CD8-positive, alpha-beta T cell (primary cell): ENCODE measurements at regions of chr15 and their contacts with region 1.

Region 1: DNA sequence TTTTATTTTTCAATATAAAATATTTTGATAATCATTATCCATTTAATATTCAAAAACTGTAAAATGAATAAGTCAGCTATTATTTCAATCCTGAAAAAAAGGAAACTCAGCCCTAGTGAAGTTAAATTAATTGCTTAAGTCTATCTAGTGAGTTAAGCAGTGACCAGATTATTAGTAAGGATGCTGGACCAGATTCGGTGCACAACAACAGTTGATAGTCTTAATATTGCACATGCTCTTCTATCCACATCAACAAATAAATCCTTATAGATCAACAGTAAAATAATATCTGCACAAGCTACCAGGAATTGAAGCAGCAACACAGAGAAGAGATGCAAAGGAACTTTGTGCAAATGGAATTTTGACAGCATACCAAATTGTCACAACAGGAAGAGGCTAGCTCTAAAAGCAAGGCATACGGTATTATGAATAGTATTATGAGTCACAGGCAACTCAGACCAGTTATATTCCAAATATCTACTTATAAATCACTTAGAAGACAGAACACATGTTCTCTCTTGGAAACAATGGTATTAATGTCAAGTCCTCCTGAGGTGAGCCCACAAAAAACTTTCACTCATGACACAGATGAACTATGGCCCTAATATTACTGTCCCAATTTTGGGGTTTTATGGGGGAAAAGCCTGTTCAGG is 24.9 kb downstream of the VPS13C start:
- DNase-seq: no peak
- ATAC-seq: no peak
- H3K4me3 ChIP-seq: no peak overlapping the region
- H3K4me3 Mint-ChIP-seq: no peak overlapping the region
- H3K27ac ChIP-seq: no peak overlapping the region
- H3K27ac Mint-ChIP-seq: no peak overlapping the region
- H3K4me1 ChIP-seq: no peaks in the 10 kb centered on the region
- H3K4me1 Mint-ChIP-seq: peaks cover 26% of the 10 kb centered on the region
- H3K27me3 ChIP-seq: no peaks in the 10 kb centered on the region
- H3K27me3 Mint-ChIP-seq: no peaks in the 10 kb centered on the region
- CTCF ChIP-seq: no peak

Region 2: DNA sequence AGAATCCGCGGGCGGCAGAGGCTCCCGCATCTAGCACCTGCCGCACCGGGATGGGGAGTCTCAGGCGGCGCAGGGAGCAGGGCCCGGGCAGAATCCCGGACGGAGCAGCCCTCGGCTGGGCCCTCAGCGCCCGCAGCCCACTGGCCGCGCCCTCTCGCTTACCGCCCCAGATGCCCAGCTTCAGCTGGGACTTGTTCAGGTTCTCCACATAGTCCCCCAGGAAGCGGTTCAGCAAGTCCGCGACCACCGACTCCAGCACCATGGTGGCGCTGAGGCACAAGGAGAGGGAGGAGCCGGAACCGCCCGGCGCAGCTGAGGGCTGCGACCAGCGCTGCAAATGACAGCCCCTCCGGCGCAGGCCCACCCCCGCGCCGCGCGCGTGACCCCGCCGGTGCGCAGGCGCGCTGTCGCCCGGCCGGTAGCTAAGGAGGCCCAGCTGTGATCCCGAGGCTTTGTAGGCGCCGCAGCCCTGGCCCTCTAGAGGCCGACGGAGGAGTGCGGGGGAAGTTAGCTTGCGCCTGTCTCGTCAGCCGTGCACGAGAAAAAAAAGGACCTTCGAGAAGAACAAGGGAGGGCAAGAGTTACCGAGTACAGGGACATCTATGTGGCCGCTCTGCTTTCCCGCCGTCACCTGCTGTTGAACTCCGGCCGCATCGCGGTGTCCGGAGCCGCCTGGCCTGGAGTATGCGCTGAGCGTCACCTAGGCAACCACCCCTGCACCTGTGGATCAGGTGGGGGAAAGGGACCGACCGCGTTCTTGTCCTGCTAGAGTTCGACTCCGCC is 24.9 kb after region 1 on chr15 and contains the start of gene VPS13C:
- CTCF ChIA-PET with region 1: interaction called, 3 read pairs
- POLR2A ChIA-PET with region 1: no interaction called
- intact Hi-C with region 1: loop called in 1 of 2 experiments (anchors 2 kb)
- DNase-seq: peak; percentile 85 to 97 (median 89)
- ATAC-seq: peak; percentile 82
- H3K4me3 ChIP-seq: peak within 1 kb of the TSS; percentile 89 to 95
- H3K4me3 Mint-ChIP-seq: peak within 1 kb of the TSS; percentile 93
- H3K27ac ChIP-seq: peak within 1 kb of the TSS; percentile 90 to 91
- H3K27ac Mint-ChIP-seq: peak within 1 kb of the TSS; percentile 95
- H3K4me1 ChIP-seq: peaks cover 25% of the 10 kb centered on the region
- H3K4me1 Mint-ChIP-seq: peaks cover 46% of the 10 kb centered on the region
- H3K27me3 ChIP-seq: no peaks in the 10 kb centered on the region
- H3K27me3 Mint-ChIP-seq: no peaks in the 10 kb centered on the region
- CTCF ChIP-seq: peak; percentile 69
- total RNA-seq, gene VPS13C: 55.2 to 59.4 TPM

Region 3: DNA sequence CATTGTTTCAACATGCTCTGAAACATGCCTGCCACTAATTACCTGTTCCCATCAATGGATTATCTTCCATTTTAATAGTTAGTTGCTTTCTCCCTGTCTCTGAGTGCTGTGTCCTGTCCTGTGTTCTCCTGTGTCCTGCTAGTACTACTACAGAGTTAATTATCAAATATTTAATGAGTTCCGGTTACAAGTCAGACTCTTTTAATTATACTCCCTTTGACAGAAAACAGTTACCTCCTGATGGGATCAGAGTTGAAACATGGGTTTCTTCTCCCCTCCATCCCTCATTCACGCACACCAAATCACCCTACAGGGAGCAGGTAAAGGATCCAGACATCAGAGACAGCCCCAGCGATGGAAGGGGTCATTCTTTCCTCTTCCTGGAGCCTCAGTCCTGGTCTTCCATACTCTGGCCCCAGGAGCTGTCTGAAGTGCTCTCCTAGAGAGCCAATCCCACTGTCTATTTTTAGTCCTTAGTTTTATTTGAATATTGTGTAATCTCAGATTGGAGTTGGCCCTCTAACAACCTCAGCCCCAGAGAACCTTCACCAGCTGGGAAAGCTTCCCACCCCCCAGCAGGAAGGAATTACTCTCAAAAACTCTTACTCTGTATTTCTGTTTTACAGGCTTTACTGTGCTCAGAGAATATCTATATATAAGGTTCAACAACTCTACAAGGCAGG is 266.8 kb after region 1 on chr15:
- CTCF ChIA-PET with region 1: no interaction called
- POLR2A ChIA-PET with region 1: no interaction called
- intact Hi-C with region 1: no loop called
- DNase-seq: no peak
- ATAC-seq: no peak
- H3K4me3 ChIP-seq: no peak overlapping the region
- H3K4me3 Mint-ChIP-seq: no peak overlapping the region
- H3K27ac ChIP-seq: no peak overlapping the region
- H3K27ac Mint-ChIP-seq: no peak overlapping the region
- H3K4me1 ChIP-seq: no peaks in the 10 kb centered on the region
- H3K4me1 Mint-ChIP-seq: peaks cover 8% of the 10 kb centered on the region
- H3K27me3 ChIP-seq: peaks cover 0 to 2% of the 10 kb centered on the region in 2 experiments
- H3K27me3 Mint-ChIP-seq: peaks cover 18% of the 10 kb centered on the region
- CTCF ChIP-seq: no peak